ENCODE measurements at regions of chr9 and their contacts with region 1.

Region 1: GRCh38 chr9:136564379-136564988 is 18.6 kb upstream of the NOTCH1 start:
- DNase-seq: peak; percentile 91

Region 2: DNA sequence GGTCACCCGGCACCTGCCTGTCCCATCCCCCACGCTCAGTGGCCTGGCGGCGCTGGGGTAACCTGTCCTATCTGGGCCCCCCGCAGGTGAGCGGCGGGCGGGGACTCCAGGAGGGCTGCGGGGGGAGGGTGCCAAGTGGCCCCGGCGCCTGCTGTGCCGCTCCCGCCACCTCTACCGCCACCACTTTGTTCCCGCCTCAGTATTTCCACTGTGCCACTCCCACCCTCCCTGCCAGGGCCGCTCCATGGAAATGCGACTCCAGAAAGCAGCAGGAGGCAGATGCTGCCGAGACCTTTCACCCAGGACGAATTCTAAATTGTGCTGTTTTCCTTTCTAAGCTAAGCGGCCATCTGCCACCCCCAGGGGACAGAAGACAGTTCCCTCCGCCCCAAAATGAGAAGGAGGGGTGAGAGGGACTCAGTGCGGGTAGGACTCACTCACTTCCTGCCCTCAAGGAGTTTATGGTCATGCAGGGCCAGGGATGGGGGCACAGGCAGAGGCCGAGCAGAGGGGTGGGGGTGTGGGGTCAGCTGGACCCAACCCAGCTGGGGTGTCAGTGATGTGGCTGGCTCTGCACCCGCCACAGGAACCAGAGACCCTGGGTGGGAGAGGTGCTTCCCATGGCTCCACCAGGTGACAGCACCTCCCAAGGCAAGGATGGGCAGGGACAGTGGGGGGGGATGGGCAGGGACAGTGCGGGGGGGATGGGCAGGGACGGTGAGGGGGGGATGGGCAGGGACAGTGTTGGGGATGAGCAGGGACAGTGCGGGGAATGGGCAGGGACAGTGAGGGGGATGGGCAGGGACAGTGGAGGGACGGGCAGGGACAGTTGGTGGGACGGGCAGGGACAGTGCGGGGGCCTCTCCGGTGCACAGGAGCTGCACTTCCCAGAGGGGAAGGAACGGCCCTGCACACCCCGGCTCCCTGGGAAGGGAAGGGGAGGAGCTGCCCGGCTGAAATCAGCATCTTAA is 36.5 kb before region 1 on chr9:
- intact Hi-C with region 1: no loop called
- DNase-seq: no peak

Region 3: DNA sequence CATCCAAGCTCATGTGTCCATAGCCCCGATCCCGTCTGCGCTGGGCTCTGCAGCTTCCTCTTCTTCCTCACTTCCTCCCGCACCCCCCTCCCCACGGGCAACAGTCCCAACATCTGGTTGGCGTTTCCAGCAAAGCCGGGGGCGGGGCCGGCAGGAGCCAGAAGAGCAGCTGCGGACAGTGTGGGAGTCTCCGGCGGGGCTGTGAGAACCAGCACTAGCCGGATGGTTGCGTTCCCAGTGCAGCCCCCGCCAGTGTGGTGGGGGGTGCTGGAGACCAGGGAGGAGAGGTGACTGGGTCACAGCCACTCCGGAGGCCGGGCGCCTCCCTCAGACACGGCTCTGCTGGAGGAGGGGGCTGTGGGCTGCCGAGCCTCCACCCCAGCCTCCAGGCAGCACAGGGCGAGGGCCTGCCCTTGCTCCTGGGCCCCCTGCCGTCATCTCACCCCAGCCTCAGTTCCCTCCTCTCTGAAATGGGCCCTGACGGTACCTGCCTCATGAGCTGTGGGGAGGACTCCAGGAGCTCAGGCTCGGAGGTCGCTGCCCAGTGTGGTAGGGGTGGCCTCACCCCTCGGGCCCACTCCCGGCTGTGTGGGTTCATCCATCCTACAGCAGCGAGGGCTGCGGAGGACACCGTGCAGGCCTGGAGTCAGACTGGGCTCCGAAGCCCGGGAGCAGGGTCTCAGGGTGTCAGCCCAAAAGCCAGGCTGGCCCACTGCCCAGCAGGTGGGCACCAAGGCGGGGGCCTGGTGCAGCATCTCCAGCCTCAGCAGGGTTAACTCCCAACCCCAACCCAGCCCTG is 22.9 kb after region 1 on chr9:
- intact Hi-C with region 1: loop called (anchors 2 kb)
- DNase-seq: peak; percentile 91